Activated T-helper 1 cell treated with anti-CD3 and anti-CD28 coated beads, Interleukin-12 subunit alpha, Interleukin-12 subunit beta, Interleukin-2, Interleukin-4 antibody, amounts not matched to agents 30 ng/mL and 10 ng/mL and 1 ng/mL, durations not matched to agents 14 hours and 24 hours and 36 hours (primary cell): ENCODE measurements at regions of chr9 and their contacts with region 1.

Region 1: DNA sequence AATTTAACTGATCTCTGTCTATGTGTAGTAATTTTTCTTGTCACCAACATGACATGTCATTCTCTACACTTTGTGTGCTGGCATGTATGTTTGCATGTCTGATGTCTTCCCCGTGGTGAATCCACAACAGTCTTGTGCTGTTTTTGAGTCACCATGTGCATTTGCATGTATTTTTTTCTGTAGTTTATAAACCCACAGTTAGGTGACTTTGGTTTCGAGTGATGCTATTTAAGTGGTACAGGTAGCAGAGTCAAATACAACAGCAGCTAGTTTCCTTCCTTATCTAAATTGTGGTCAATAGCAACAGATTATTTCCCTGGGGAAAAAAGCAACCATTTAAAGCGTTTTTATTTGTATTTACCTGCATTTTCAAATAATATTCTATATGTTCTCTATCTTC is 89.9 kb upstream of the FSD1L start:
- DNase-seq: no peak
- H3K4me3 Mint-ChIP-seq: no peak overlapping the region
- H3K27ac Mint-ChIP-seq: no peak overlapping the region
- H3K4me1 Mint-ChIP-seq: peaks cover 18% of the 10 kb centered on the region
- H3K27me3 Mint-ChIP-seq: no peaks in the 10 kb centered on the region

Region 2: DNA sequence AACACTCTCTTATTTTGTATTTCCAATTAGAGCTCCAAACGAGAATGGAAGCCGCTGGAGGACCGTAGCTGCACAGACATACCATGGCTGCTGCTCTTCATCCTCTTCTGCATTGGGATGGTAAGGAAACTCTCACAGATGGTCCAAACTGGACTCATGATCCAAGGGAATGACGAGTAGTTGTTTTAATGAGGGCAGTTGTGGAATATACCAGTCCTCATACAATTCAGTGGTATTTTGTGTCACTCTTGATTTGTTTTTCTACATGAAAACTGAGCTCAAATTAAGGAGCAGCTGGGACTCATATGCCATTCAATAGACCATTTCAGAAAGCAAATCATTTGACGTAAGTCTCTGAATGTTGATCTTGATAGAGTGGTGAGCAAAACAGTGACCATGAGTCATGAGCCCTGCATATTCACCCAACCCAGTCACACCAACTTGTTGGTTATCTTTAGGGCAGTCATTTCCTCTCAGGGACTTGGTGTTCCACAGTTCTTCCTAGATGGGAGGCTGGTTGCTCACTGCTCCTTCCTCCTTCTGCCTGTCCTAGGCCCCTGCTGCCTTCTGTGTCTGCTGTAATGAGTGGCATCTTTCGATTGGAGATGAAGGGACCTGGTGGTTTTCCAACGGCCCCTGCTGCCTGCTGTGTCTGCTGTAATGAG is 58.6 kb before region 1 on chr9:
- intact Hi-C with region 1: loop called (anchors 5 kb)
- DNase-seq: no peak
- H3K4me3 Mint-ChIP-seq: no peak overlapping the region
- H3K27ac Mint-ChIP-seq: no peak overlapping the region
- H3K4me1 Mint-ChIP-seq: peaks cover 11% of the 10 kb centered on the region
- H3K27me3 Mint-ChIP-seq: peaks cover 2% of the 10 kb centered on the region

Region 3: GRCh38 chr9:105318729-105319191 is 39.2 kb before region 1 on chr9:
- intact Hi-C with region 1: no loop called
- DNase-seq: no peak
- H3K4me3 Mint-ChIP-seq: no peak overlapping the region
- H3K27ac Mint-ChIP-seq: no peak overlapping the region
- H3K4me1 Mint-ChIP-seq: no peaks in the 10 kb centered on the region
- H3K27me3 Mint-ChIP-seq: peaks cover 8% of the 10 kb centered on the region

Region 4: DNA sequence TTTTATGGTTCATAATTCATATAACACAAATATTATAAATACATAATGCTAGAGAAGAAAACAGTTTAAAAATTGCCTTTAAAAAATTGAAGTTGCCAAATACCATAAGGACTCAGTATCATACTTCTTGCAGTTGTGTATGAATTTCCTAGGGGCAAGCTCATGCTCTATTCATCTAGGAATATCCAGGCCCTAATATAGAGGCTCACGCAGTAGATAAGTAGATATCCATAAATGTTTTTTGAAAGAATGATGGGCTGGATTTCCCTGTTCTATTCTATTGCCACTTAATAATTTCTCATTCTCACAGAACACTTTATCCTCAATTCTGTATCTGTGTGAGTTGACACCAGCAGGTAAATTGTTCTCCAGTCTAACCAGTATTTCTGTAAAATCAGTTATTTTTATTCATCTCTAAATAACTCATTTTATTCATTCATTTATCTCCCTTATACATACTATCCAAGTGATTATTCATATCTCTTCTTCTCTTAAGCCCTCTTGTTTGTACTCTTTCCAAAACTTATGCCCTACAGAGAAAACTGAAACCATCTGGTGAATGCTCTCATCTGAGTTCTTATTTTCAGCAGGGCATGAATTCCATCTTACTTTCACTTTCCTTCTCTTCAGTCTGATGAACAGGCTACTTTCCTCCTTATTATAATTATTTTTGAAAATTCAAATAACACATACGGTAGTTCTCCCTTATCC is 16.3 kb before region 1 on chr9:
- intact Hi-C with region 1: loop called (anchors 2 kb)
- DNase-seq: no peak
- H3K4me3 Mint-ChIP-seq: no peak overlapping the region
- H3K27ac Mint-ChIP-seq: no peak overlapping the region
- H3K4me1 Mint-ChIP-seq: peaks cover 23% of the 10 kb centered on the region
- H3K27me3 Mint-ChIP-seq: no peaks in the 10 kb centered on the region

Region 5: GRCh38 chr9:105385381-105385985 is 27.5 kb after region 1 on chr9:
- intact Hi-C with region 1: loop called (anchors 2 kb)
- DNase-seq: peak; percentile 25
- H3K4me3 Mint-ChIP-seq: peak overlapping the region; percentile 82
- H3K27ac Mint-ChIP-seq: peak overlapping the region; percentile 68
- H3K4me1 Mint-ChIP-seq: peaks cover 27% of the 10 kb centered on the region
- H3K27me3 Mint-ChIP-seq: peaks cover 6% of the 10 kb centered on the region

Region 6: GRCh38 chr9:105405514-105406131 is 47.7 kb after region 1 on chr9:
- intact Hi-C with region 1: loop called (anchors 1 kb)
- DNase-seq: peak; percentile 61
- H3K4me3 Mint-ChIP-seq: peak overlapping the region; percentile 23
- H3K27ac Mint-ChIP-seq: peak overlapping the region; percentile 90
- H3K4me1 Mint-ChIP-seq: peaks cover 31% of the 10 kb centered on the region
- H3K27me3 Mint-ChIP-seq: peaks cover 66% of the 10 kb centered on the region

Region 7: GRCh38 chr9:105541838-105542237 is 183.9 kb after region 1 on chr9:
- intact Hi-C with region 1: loop called (anchors 1 kb)
- DNase-seq: no peak
- H3K4me3 Mint-ChIP-seq: no peak overlapping the region
- H3K27ac Mint-ChIP-seq: peak overlapping the region; percentile 36
- H3K4me1 Mint-ChIP-seq: peaks cover 7% of the 10 kb centered on the region
- H3K27me3 Mint-ChIP-seq: no peaks in the 10 kb centered on the region

Region 8: GRCh38 chr9:105694190-105694847 is 336.4 kb after region 1 on chr9 and contains the start of gene TMEM38B:
- intact Hi-C with region 1: loop called (anchors 10 kb)
- DNase-seq: peak; percentile 77
- H3K4me3 Mint-ChIP-seq: peak within 1 kb of the TSS; percentile 87
- H3K27ac Mint-ChIP-seq: peak within 1 kb of the TSS; percentile 61
- H3K4me1 Mint-ChIP-seq: peaks cover 26% of the 10 kb centered on the region
- H3K27me3 Mint-ChIP-seq: peaks cover 24% of the 10 kb centered on the region
- total RNA-seq, gene TMEM38B: 11.9 and 13.8 TPM in 2 replicates

Region 9: GRCh38 chr9:105722099-105722498 is 364.2 kb after region 1 on chr9:
- intact Hi-C with region 1: no loop called
- DNase-seq: no peak
- H3K4me3 Mint-ChIP-seq: no peak overlapping the region
- H3K27ac Mint-ChIP-seq: no peak overlapping the region
- H3K4me1 Mint-ChIP-seq: no peaks in the 10 kb centered on the region
- H3K27me3 Mint-ChIP-seq: no peaks in the 10 kb centered on the region